Breast epithelium (tissue), 4 donors: ENCODE measurements at regions of chr19 and their contacts with region 1.

Region 1: GRCh38 chr19:51076631-51077213 is 6.0 kb downstream of the KLK14 start:
- DNase-seq: no peak
- H3K4me3 ChIP-seq: no peak overlapping the region
- H3K27ac ChIP-seq: no peak overlapping the region
- H3K4me1 ChIP-seq: no peaks in the 10 kb centered on the region
- H3K27me3 ChIP-seq: no peaks in the 10 kb centered on the region
- CTCF ChIP-seq: no peak
- POLR2A ChIP-seq: no peak

Region 2: GRCh38 chr19:51091926-51092873 is 15.5 kb after region 1 on chr19:
- intact Hi-C with region 1: loop called (anchors 2 kb)
- DNase-seq: no peak
- H3K4me3 ChIP-seq: no peak overlapping the region
- H3K27ac ChIP-seq: peak overlapping the region in 1 of 2 donors; percentile 30
- H3K4me1 ChIP-seq: peaks cover 0 to 11% of the 10 kb centered on the region in 2 donors
- H3K27me3 ChIP-seq: no peaks in the 10 kb centered on the region
- CTCF ChIP-seq: no peak
- POLR2A ChIP-seq: no peak

Region 3: GRCh38 chr19:51131780-51132680 is 55.3 kb after region 1 on chr19:
- intact Hi-C with region 1: no loop called
- DNase-seq: no peak
- H3K4me3 ChIP-seq: no peak overlapping the region
- H3K27ac ChIP-seq: peak overlapping the region in 1 of 2 donors; percentile 35
- H3K4me1 ChIP-seq: no peaks in the 10 kb centered on the region
- H3K27me3 ChIP-seq: no peaks in the 10 kb centered on the region
- CTCF ChIP-seq: no peak
- POLR2A ChIP-seq: no peak